ENCODE measurements at regions of chr9 and their contacts with region 1.

Region 1: GRCh38 chr9:136170006-136170901 is 34.7 kb downstream of the LHX3 start:
- DNase-seq: no peak
- ATAC-seq: peak; percentile 88
- H3K4me3 ChIP-seq: no peak overlapping the region
- H3K27ac ChIP-seq: no peak overlapping the region
- H3K4me1 ChIP-seq: no peaks in the 10 kb centered on the region; the same call in 1 of the 2 replicates
- H3K27me3 ChIP-seq: no peaks in the 10 kb centered on the region
- CTCF ChIP-seq: peak; percentile 89

Region 2: GRCh38 chr9:136124976-136125692 is 45.1 kb before region 1 on chr9:
- CTCF ChIA-PET with region 1: no interaction called
- POLR2A ChIA-PET with region 1: no interaction called
- in situ Hi-C with region 1: no loop called
- intact Hi-C with region 1: no loop called
- DNase-seq: no peak
- ATAC-seq: no peak
- H3K4me3 ChIP-seq: no peak overlapping the region
- H3K27ac ChIP-seq: no peak overlapping the region
- H3K4me1 ChIP-seq: peaks cover 3% of the 10 kb centered on the region; the same call in 1 of the 2 replicates
- H3K27me3 ChIP-seq: no peaks in the 10 kb centered on the region
- CTCF ChIP-seq: no peak

Region 3: GRCh38 chr9:136225748-136226679 is 55.8 kb after region 1 on chr9:
- CTCF ChIA-PET with region 1: no interaction called
- POLR2A ChIA-PET with region 1: no interaction called
- in situ Hi-C with region 1: no loop called
- intact Hi-C with region 1: loop called (anchors 5 kb)
- DNase-seq: peak; percentile 46
- ATAC-seq: peak; percentile 88
- H3K4me3 ChIP-seq: no peak overlapping the region
- H3K27ac ChIP-seq: no peak overlapping the region
- H3K4me1 ChIP-seq: peaks cover 10% of the 10 kb centered on the region
- H3K27me3 ChIP-seq: no peaks in the 10 kb centered on the region
- CTCF ChIP-seq: peak; percentile 91

Region 4: GRCh38 chr9:136354592-136355085 is 184.4 kb after region 1 on chr9:
- CTCF ChIA-PET with region 1: no interaction called
- POLR2A ChIA-PET with region 1: no interaction called
- in situ Hi-C with region 1: no loop called
- intact Hi-C with region 1: no loop called
- DNase-seq: no peak
- ATAC-seq: peak; percentile 59
- H3K4me3 ChIP-seq: peak overlapping the region in 1 of 2 experiments; percentile 14; a peak in 1 of 4 replicates
- H3K27ac ChIP-seq: peak overlapping the region; percentile 51; the same call in 1 of the 2 replicates
- H3K4me1 ChIP-seq: peaks cover 19% of the 10 kb centered on the region
- H3K27me3 ChIP-seq: no peaks in the 10 kb centered on the region
- CTCF ChIP-seq: no peak